B cell (primary cell): ENCODE measurements at regions of chr2 and their contacts with region 1.

Region 1: DNA sequence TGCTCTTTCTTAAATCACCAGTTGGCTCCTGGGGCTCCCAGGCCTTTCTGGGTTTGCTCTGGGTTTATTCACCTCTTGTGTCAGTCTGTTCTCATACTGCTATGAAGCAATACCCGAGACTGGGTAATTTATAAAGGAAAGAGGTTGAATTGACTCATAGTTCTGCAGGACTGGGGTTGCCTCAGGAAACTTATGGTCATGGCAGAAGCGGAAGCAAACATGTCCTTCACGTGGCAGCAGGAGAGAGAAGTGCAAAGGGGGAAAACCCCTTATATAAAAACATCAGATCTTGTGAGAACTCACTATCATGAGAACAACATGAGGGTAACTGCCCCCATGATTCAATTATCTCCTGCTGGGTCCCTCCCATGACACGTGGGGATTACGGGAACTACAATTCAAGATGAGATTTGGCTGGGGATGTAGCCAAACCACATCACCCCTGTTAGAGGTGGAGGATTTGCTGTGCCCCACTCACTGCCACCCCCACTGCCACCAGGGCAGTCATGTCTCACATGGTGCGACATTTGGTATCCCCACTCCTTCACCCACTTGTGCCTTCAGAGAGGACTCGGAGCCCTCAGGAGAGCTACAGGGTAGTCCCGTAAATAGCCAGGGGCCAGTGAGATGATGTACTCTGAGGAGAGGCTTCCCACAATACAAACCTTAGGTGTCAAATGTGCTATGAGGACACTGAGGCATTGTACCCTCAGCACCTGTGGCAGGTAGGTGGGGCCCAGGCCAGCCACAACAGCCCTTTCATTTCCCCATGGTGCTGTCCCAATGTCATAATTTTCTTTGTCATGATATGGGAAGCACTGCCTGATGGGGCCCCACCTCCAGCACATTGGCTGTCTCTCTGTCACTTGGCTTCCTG is 35.7 kb downstream of the CDC42EP3 start:
- DNase-seq: peak; percentile 90
- ATAC-seq: peak; percentile 85
- H3K4me3 ChIP-seq: peak overlapping the region in 1 of 5 experiments; percentile 37
- H3K4me3 Mint-ChIP-seq: peak overlapping the region; percentile 72
- H3K27ac ChIP-seq: peak overlapping the region; percentile 93 to 98
- H3K27ac Mint-ChIP-seq: peak overlapping the region; percentile 96
- H3K4me1 ChIP-seq: peaks cover 33 to 34% of the 10 kb centered on the region in 2 donors
- H3K4me1 Mint-ChIP-seq: peaks cover 44% of the 10 kb centered on the region
- H3K27me3 ChIP-seq: no peaks in the 10 kb centered on the region
- H3K27me3 Mint-ChIP-seq: no peaks in the 10 kb centered on the region
- CTCF ChIP-seq: no peak

Region 2: GRCh38 chr2:37558623-37559022 is 77.1 kb before region 1 on chr2:
- CTCF ChIA-PET with region 1: interaction called, 3 read pairs
- POLR2A ChIA-PET with region 1: no interaction called
- intact Hi-C with region 1: loop called (anchors 1 kb)
- DNase-seq: peak; percentile 39
- ATAC-seq: no peak
- H3K4me3 ChIP-seq: no peak overlapping the region
- H3K4me3 Mint-ChIP-seq: peak overlapping the region; percentile 8
- H3K27ac ChIP-seq: no peak overlapping the region
- H3K27ac Mint-ChIP-seq: peak overlapping the region; percentile 57
- H3K4me1 ChIP-seq: peaks cover 41 to 47% of the 10 kb centered on the region in 2 donors
- H3K4me1 Mint-ChIP-seq: peaks cover 38% of the 10 kb centered on the region
- H3K27me3 ChIP-seq: peaks cover 0 to 11% (median 0%) of the 10 kb centered on the region in 4 experiments
- H3K27me3 Mint-ChIP-seq: no peaks in the 10 kb centered on the region
- CTCF ChIP-seq: no peak

Region 3: DNA sequence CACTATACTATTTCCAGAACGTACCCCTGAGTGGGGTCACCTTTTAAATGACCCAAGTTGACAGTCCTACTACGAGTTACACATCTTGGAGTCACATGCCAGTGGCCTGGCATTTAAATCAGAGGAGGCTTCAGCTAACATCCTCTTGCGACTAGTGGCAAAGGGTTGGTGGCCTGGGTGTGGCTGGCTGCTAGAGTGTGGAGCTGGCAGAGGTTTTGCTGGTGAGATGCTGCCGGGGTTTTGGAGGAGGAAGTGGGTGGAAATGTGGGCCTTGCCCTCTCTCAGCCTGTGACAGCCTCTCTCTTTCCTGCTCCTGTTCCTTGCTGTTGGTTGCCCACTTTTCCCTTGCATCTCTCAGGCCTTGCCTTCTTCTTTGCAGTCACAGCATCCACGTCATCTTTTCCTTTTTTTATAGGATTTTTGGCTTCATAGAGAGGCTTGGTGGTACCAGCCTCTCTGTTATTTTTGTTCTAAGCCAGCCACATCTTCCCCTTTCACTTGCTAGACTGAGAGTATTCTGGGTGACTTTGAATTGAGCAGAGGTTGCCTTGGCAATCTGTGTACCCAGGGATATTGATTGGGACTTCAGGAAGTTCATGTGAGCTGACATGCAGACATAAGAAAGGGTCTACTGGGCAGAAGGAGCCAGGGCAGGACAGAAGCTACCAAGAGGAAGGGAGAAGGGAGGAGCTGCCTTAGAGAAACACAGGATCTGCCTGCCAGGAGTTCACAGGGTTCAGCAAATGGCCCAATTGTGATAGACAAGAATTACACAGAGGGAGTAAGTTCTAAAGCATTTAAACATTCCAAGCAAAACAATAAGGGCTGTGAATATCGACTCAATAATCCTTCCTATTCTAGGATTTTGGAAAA is 19.7 kb before region 1 on chr2:
- CTCF ChIA-PET with region 1: interaction called, 3 read pairs
- POLR2A ChIA-PET with region 1: no interaction called
- intact Hi-C with region 1: loop called (anchors 1 kb)
- DNase-seq: peak; percentile 81
- ATAC-seq: peak; percentile 87
- H3K4me3 ChIP-seq: no peak overlapping the region
- H3K4me3 Mint-ChIP-seq: peak overlapping the region; percentile 46
- H3K27ac ChIP-seq: peak overlapping the region; percentile 77 to 79
- H3K27ac Mint-ChIP-seq: peak overlapping the region; percentile 94
- H3K4me1 ChIP-seq: peaks cover 28 to 30% of the 10 kb centered on the region in 2 donors
- H3K4me1 Mint-ChIP-seq: peaks cover 37% of the 10 kb centered on the region
- H3K27me3 ChIP-seq: no peaks in the 10 kb centered on the region
- H3K27me3 Mint-ChIP-seq: no peaks in the 10 kb centered on the region
- CTCF ChIP-seq: no peak

Region 4: GRCh38 chr2:37648331-37649011 is 12.7 kb after region 1 on chr2:
- CTCF ChIA-PET with region 1: interaction called, 4 read pairs
- POLR2A ChIA-PET with region 1: interaction called, 6 read pairs
- intact Hi-C with region 1: loop called (anchors 1 kb)
- DNase-seq: peak; percentile 41
- ATAC-seq: peak; percentile 53
- H3K4me3 ChIP-seq: no peak overlapping the region
- H3K4me3 Mint-ChIP-seq: peak overlapping the region; percentile 41
- H3K27ac ChIP-seq: peak overlapping the region; percentile 45 to 58
- H3K27ac Mint-ChIP-seq: peak overlapping the region; percentile 87
- H3K4me1 ChIP-seq: peaks cover 66 to 67% of the 10 kb centered on the region in 2 donors
- H3K4me1 Mint-ChIP-seq: peaks cover 83% of the 10 kb centered on the region
- H3K27me3 ChIP-seq: no peaks in the 10 kb centered on the region
- H3K27me3 Mint-ChIP-seq: no peaks in the 10 kb centered on the region
- CTCF ChIP-seq: no peak

Region 5: GRCh38 chr2:37672104-37672869 is 36.5 kb after region 1 on chr2:
- CTCF ChIA-PET with region 1: interaction called, 3 read pairs
- POLR2A ChIA-PET with region 1: interaction called, 3 read pairs
- intact Hi-C with region 1: loop called (anchors 1 kb)
- DNase-seq: peak; percentile 86
- ATAC-seq: peak; percentile 48
- H3K4me3 ChIP-seq: peak overlapping the region; percentile 44 to 92 (median 84)
- H3K4me3 Mint-ChIP-seq: peak overlapping the region; percentile 98
- H3K27ac ChIP-seq: peak overlapping the region; percentile 81 to 83
- H3K27ac Mint-ChIP-seq: peak overlapping the region; percentile 95
- H3K4me1 ChIP-seq: peaks cover 31 to 38% of the 10 kb centered on the region in 2 donors
- H3K4me1 Mint-ChIP-seq: peaks cover 52% of the 10 kb centered on the region
- H3K27me3 ChIP-seq: no peaks in the 10 kb centered on the region
- H3K27me3 Mint-ChIP-seq: no peaks in the 10 kb centered on the region
- CTCF ChIP-seq: no peak

Region 6: GRCh38 chr2:37683921-37684780 is 48.4 kb after region 1 on chr2:
- CTCF ChIA-PET with region 1: no interaction called
- POLR2A ChIA-PET with region 1: no interaction called
- intact Hi-C with region 1: no loop called
- DNase-seq: no peak
- ATAC-seq: peak; percentile 45
- H3K4me3 ChIP-seq: no peak overlapping the region
- H3K4me3 Mint-ChIP-seq: no peak overlapping the region
- H3K27ac ChIP-seq: no peak overlapping the region
- H3K27ac Mint-ChIP-seq: no peak overlapping the region
- H3K4me1 ChIP-seq: peaks cover 4 to 9% of the 10 kb centered on the region in 2 donors
- H3K4me1 Mint-ChIP-seq: peaks cover 7% of the 10 kb centered on the region
- H3K27me3 ChIP-seq: no peaks in the 10 kb centered on the region
- H3K27me3 Mint-ChIP-seq: no peaks in the 10 kb centered on the region
- CTCF ChIP-seq: no peak